ENCODE measurements at regions of chr12 and their contacts with region 1.

Region 1: GRCh38 chr12:80269803-80270552 is 170.6 kb downstream of the OTOGL start:
- DNase-seq: no peak
- H3K4me3 ChIP-seq: no peak overlapping the region
- H3K27ac ChIP-seq: no peak overlapping the region
- H3K4me1 ChIP-seq: no peaks in the 10 kb centered on the region
- H3K27me3 ChIP-seq: no peaks in the 10 kb centered on the region
- CTCF ChIP-seq: peak in 2 of 3 donors; percentile 40 to 45
- EP300 ChIP-seq: no peak
- POLR2A ChIP-seq: no peak

Region 2: DNA sequence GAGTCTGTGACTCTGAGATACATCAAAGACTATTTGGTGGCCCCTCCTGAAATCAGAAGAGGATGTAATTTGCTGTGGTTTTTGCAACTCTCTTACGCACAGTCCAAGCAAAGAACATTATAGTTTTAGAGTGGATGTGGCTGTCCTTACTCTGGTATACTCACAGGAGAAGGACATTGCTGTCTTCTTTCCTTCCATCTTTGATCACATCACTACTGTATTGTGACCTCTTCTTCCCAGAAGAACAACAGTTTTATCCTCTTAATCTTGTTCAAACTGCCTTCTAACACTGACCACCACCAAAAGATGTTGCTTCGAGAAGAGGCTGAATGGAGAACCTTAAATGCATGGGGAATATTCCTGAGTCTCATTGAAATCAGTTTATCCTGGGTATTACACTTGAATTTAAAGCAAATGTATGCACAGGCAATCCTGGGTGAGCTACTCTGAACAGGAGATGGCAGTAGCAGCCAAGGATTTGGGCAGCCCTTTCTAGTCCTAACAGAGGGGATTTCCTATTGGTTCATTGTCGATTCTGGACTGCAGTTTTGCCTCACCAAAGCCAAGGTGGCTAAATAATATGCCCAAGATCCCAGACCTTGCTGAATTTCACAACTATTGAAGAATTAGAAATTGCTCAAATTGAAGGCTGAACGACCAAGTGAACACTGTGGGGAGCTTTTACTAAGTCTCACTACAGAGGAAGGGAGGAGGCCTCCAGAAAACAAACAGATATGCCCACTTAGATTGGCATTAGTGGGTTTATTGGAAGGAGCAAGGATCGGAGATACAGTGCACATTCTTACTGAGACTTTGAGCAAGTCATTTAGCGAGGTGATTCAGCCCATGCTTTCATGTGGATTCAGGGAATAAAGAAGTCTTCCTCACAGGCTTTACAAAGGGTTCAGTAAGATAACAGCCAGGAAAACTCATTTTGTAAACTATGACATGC is 862.0 kb before region 1 on chr12:
- intact Hi-C with region 1: loop called in 3 of 4 experiments (anchors 10 kb)
- DNase-seq: peak; percentile 51 to 65 (median 56)
- H3K4me3 ChIP-seq: no peak overlapping the region
- H3K27ac ChIP-seq: no peak overlapping the region
- H3K4me1 ChIP-seq: no peaks in the 10 kb centered on the region
- H3K27me3 ChIP-seq: no peaks in the 10 kb centered on the region
- CTCF ChIP-seq: peak; percentile 22 to 61 (median 56)
- EP300 ChIP-seq: no peak
- POLR2A ChIP-seq: no peak

Region 3: DNA sequence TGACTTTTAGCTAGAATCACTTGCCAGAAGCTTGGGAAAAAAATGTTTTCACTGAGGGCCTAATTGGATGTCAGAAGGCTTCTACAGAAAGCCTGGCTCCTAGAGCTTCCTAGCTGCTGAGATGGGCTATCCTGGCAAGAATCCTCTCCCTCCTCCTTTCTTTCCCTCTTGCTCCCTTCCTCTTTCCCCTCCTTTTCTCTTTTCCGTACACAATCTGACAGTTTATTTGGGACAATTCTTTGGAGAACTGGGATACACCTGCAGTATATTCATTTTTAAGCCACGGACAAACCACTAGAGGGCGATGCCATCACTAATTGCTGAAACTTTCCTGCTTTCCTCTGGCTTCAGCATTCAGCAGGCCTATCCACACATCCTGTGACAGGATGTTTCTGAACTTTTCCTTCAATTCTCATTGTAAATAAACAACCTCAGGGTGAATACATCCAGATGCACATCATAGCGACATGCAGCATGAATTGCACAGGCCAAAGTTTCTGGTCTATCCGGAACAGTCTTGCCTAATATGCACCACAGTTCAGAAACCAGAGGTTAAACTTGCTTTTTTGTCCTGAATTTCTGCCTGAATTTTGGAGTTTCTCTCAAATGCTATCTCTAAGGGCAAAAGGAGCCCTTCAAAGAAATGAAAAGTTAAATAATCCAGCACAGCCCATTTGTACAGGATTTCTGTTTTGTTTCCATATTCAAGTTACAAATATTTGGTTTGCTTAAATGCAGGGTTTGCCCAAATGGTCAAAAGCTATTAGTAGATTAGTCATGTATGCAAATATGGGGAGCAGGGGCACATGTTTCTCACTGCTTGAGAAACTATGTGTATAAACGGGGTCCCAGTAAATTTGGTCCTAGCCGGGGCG is 722.0 kb before region 1 on chr12:
- intact Hi-C with region 1: loop called in 2 of 4 experiments (anchors 5 to 10 kb)
- DNase-seq: peak in 4 of 5 donors; percentile 25 to 53 (median 44)
- H3K4me3 ChIP-seq: no peak overlapping the region
- H3K27ac ChIP-seq: no peak overlapping the region
- H3K4me1 ChIP-seq: peaks cover 12% of the 10 kb centered on the region
- H3K27me3 ChIP-seq: no peaks in the 10 kb centered on the region
- CTCF ChIP-seq: peak; percentile 46 to 57 (median 48)
- EP300 ChIP-seq: no peak
- POLR2A ChIP-seq: no peak

Region 4: DNA sequence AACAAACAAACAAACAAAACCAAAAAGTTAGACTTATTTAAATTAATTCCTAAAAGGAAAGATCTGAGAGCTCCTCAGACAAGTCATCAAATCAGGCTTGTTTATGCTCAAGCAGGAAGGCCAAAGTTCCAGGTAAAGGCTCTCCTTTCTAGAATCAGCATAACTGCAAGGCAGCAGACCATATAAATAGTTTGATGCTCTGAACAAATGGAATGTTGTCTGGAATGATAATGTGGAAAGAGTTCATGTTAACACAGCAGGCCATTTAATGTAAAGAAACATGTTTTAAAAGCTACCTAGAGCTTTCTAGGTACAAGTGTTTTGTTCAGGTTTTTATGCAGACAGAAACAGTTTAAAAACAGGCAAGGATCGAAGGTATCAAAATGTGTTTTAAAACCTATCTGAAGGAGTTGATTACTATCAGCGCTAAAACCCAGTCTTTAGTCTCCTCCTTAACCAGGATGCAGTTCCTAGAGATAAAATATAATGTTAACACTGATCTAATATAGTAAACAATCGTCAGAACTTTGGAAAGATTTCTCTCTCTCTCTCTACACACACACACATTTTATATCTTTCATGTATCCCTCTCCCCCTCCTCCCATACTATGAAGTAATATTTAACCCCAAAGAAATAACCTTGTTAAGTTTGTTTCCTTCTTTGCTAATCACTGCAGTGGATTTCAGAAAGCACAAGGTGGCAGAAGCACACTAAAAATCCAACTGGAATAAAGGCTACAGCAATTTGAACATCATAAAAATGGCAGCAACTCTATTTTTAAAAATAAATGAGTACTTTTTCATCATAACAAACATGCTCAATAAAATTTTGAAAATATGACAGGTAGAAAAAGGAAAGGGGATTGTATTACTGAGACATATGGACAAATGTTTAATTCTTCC is 714.7 kb before region 1 on chr12:
- intact Hi-C with region 1: loop called in 1 of 4 experiments (anchors 10 kb)
- DNase-seq: no peak
- H3K4me3 ChIP-seq: no peak overlapping the region
- H3K27ac ChIP-seq: no peak overlapping the region
- H3K4me1 ChIP-seq: peaks cover 10% of the 10 kb centered on the region
- H3K27me3 ChIP-seq: no peaks in the 10 kb centered on the region
- CTCF ChIP-seq: peak; percentile 24 to 68 (median 63)
- EP300 ChIP-seq: no peak
- POLR2A ChIP-seq: no peak

Region 5: DNA sequence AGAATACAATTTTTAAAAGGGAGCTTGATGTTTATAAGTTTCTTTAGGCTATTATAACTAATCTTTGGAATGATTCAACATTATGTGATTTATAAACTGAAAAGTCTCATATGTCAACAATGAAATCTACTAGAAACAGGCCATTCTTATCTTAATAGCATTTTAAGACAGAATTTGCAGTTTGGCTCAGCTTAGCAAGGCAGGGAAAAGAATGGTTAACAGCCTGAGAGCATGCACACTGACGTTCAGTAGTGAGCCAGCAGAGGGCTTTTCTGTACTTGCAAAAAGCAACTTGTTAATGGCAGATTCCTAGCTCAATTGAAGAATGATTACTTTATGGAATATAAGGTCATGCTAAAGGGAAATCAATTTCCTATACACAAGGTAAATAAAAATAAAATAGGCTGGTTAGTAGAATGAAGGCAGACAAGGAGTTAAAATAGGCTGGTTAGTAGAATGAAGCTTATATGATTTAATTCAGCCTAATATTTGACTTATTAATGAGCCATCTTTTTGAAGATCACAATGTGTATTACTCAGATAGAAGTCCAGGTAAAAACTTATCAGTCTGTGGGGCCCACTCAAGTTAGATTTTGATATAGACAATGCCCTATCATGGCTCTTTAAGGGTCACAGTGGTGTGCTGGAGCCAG is 74.8 kb before region 1 on chr12:
- intact Hi-C with region 1: loop called in 1 of 4 experiments (anchors 5 kb)
- DNase-seq: no peak
- H3K4me3 ChIP-seq: no peak overlapping the region
- H3K27ac ChIP-seq: no peak overlapping the region
- H3K4me1 ChIP-seq: no peaks in the 10 kb centered on the region
- H3K27me3 ChIP-seq: no peaks in the 10 kb centered on the region
- CTCF ChIP-seq: peak in 1 of 3 donors; percentile 33
- EP300 ChIP-seq: no peak
- POLR2A ChIP-seq: no peak

Measured in ovary (tissue), 10 donors.